T-cell (primary cell): ENCODE measurements at regions of chr1 and their contacts with region 1.

Region 1: GRCh38 chr1:1630271-1630964 is 1.6 kb upstream of the MMP23B start:
- DNase-seq: peak; percentile 84 to 99 (median 95)
- ATAC-seq: peak; percentile 74 to 77 (median 75)
- H3K4me3 ChIP-seq: peak overlapping the region in 1 of 2 donors; percentile 28
- H3K4me3 Mint-ChIP-seq: peak overlapping the region; percentile 80 to 88 (median 86)
- H3K27ac ChIP-seq: peak overlapping the region; percentile 63
- H3K27ac Mint-ChIP-seq: peak overlapping the region; percentile 92 to 94
- H3K4me1 ChIP-seq: peaks cover 0 to 47% of the 10 kb centered on the region in 2 experiments
- H3K4me1 Mint-ChIP-seq: peaks cover 4 to 8% (median 7%) of the 10 kb centered on the region in 3 donors
- H3K27me3 ChIP-seq: peaks cover 0 to 13% of the 10 kb centered on the region in 2 experiments
- H3K27me3 Mint-ChIP-seq: peaks cover 0 to 4% of the 10 kb centered on the region in 2 donors

Region 2: DNA sequence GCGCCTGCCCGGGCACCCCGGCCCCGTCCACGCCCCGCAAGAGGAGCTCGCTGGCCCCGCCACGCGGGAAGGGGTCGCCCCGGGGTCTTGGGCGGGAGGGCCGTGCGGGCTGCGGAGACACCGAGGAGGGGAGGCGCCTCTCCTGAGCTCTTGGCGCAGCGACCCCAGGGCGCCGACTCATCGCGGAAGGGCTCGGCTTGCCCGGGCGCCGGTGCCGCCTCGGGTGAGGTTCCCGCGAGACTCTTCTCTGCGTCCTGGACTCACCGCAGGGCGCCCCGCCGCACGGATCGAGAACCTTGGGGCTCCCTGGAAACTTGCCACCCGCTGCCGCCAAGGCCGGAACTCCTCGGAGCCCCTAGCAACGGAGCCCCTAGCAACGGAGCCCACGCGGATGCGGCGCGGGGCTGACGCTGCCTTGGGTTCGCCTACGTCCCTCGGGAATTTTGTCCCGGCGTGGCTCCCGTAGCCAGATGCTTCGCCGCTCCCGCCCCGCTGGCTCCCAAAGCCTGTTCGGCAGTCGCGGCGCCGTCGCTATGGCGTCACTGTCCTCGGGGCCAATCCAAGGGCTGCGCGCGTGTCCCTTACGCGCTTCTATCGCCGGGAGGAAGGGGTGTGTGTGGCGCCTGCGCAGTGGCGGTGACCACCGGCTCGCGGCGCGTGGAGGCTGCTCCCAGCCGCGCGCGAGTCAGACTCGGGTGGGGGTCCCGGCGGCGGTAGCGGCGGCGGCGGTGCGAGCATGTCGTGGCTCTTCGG is 118.7 kb before region 1 on chr1 and contains the start of gene ATAD3A:
- CTCF ChIA-PET with region 1: no interaction called
- POLR2A ChIA-PET with region 1: no interaction called
- DNase-seq: peak; percentile 81 to 97 (median 92)
- ATAC-seq: peak; percentile 94 to 96 (median 94)
- H3K4me3 ChIP-seq: peak within 1 kb of the TSS; percentile 78 to 81
- H3K4me3 Mint-ChIP-seq: peak within 1 kb of the TSS; percentile 83 to 92 (median 90)
- H3K27ac ChIP-seq: peak within 1 kb of the TSS; percentile 79
- H3K27ac Mint-ChIP-seq: peak within 1 kb of the TSS; percentile 87 to 91
- H3K4me1 ChIP-seq: peaks cover 3 to 14% of the 10 kb centered on the region in 2 experiments
- H3K4me1 Mint-ChIP-seq: peaks cover 7 to 18% (median 13%) of the 10 kb centered on the region in 3 donors
- H3K27me3 ChIP-seq: no peaks in the 10 kb centered on the region
- H3K27me3 Mint-ChIP-seq: no peaks in the 10 kb centered on the region
- total RNA-seq, gene ATAD3A: 24.6 to 42.5 (median 31.1) TPM

Region 3: GRCh38 chr1:1615256-1616044 is 15.0 kb before region 1 on chr1 and contains the start of gene MIB2:
- CTCF ChIA-PET with region 1: interaction called in 1 of 2 experiments, 11 read pairs
- POLR2A ChIA-PET with region 1: interaction called, 3 to 16 read pairs
- DNase-seq: peak; percentile 96 to 99 (median 98)
- ATAC-seq: peak; percentile 82 to 89 (median 84)
- H3K4me3 ChIP-seq: peak within 1 kb of the TSS; percentile 85 to 92
- H3K4me3 Mint-ChIP-seq: peak within 1 kb of the TSS; percentile 90 to 95 (median 92)
- H3K27ac ChIP-seq: peak within 1 kb of the TSS; percentile 100
- H3K27ac Mint-ChIP-seq: peak within 1 kb of the TSS; percentile 94 to 98
- H3K4me1 ChIP-seq: peaks cover 14 to 27% of the 10 kb centered on the region in 2 experiments
- H3K4me1 Mint-ChIP-seq: peaks cover 28 to 34% (median 29%) of the 10 kb centered on the region in 3 donors
- H3K27me3 ChIP-seq: no peaks in the 10 kb centered on the region
- H3K27me3 Mint-ChIP-seq: no peaks in the 10 kb centered on the region
- total RNA-seq, gene MIB2: 68.9 to 105 (median 103) TPM

Region 4: DNA sequence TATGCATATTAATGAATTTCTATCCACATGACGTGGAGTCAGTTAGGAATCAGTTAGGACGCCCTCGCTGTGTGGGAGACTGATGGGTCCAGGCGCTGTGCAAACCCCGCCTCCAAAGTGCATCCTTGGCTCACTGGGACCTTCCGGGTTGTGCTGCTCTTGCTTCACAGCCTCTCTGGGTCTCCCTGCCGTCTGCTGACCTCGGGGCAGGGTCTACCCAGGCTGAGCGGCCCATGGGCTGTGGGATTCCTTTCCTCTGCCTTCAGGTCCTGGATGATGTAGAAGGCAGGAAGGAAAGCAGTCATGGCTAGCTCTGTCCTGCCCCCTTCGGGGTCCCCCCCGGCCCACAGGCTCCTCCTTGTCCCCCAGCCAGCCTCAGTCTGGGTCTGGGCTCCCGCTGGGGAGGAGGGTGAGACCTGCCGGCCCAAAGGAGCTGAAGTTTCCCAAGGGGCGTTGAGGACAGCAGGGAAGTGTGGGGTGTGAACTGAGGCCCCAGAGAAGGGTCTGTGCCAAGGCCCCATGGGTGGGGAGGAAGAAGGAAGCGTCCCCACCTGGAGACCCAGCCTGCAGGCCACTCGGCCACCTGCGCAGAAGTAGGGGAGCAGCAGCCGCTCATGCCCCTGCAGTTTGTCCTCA is 118.4 kb after region 1 on chr1:
- CTCF ChIA-PET with region 1: no interaction called
- POLR2A ChIA-PET with region 1: no interaction called
- DNase-seq: no peak
- ATAC-seq: no peak
- H3K4me3 ChIP-seq: no peak overlapping the region
- H3K4me3 Mint-ChIP-seq: peak overlapping the region in 1 of 3 donors; percentile 49
- H3K27ac ChIP-seq: no peak overlapping the region
- H3K27ac Mint-ChIP-seq: peak overlapping the region in 1 of 2 donors; percentile 58
- H3K4me1 ChIP-seq: peaks cover 0 to 5% of the 10 kb centered on the region in 2 experiments
- H3K4me1 Mint-ChIP-seq: peaks cover 0 to 6% (median 4%) of the 10 kb centered on the region in 3 donors
- H3K27me3 ChIP-seq: no peaks in the 10 kb centered on the region
- H3K27me3 Mint-ChIP-seq: no peaks in the 10 kb centered on the region